Caco-2 (cell line): ENCODE measurements at regions of chr16 and their contacts with region 1.

Region 1: GRCh38 chr16:85821441-85822135 is 22.1 kb downstream of the COX4I1 start:
- DNase-seq: peak; percentile 89 to 92
- H3K4me3 ChIP-seq: no peak overlapping the region
- H3K4me3 Mint-ChIP-seq: no peak overlapping the region
- H3K27ac Mint-ChIP-seq: no peak overlapping the region
- H3K4me1 ChIP-seq: peaks cover 3% of the 10 kb centered on the region; the same call in 1 of the 2 replicates
- H3K4me1 Mint-ChIP-seq: peaks cover 7% of the 10 kb centered on the region
- H3K27me3 ChIP-seq: no peaks in the 10 kb centered on the region
- H3K27me3 Mint-ChIP-seq: no peaks in the 10 kb centered on the region
- CTCF ChIP-seq: peak; percentile 95 to 99

Region 2: DNA sequence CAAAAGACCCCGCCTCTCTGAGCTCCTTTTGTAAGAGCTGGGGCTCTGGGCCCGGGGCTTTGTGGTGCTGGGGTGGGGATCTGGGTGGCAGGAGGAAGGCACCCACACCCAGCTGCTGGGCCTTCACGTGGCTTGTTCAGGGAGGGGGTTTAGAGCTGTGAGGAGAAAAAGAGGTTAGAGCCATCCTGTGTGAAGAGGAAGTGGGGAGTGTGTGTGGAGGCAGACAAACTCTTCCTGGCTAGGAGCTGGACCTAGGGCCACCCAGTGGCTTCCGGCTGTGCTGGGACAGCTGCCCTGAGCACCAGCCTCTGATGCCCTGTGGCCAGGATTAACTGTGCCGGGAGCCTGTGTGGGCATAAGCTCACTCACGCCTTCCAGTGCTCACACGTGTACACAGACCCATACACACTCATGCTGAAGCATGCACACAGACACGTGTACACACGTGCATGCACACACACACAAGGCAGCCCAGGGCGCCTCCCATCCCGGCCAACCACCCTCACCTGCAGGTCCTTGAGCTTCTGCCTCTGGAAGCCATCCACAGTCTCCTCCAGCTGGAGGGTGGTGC is 716.7 kb before region 1 on chr16:
- CTCF ChIA-PET with region 1: no interaction called
- POLR2A ChIA-PET with region 1: no interaction called
- intact Hi-C with region 1: no loop called
- DNase-seq: no peak
- H3K4me3 ChIP-seq: no peak overlapping the region
- H3K4me3 Mint-ChIP-seq: no peak overlapping the region
- H3K27ac Mint-ChIP-seq: no peak overlapping the region
- H3K4me1 ChIP-seq: no peaks in the 10 kb centered on the region
- H3K4me1 Mint-ChIP-seq: no peaks in the 10 kb centered on the region
- H3K27me3 ChIP-seq: no peaks in the 10 kb centered on the region
- H3K27me3 Mint-ChIP-seq: no peaks in the 10 kb centered on the region
- CTCF ChIP-seq: no peak

Region 3: GRCh38 chr16:85738923-85739695 is 82.5 kb before region 1 on chr16:
- CTCF ChIA-PET with region 1: no interaction called
- POLR2A ChIA-PET with region 1: no interaction called
- intact Hi-C with region 1: no loop called
- DNase-seq: no peak
- H3K4me3 ChIP-seq: no peak overlapping the region
- H3K4me3 Mint-ChIP-seq: no peak overlapping the region
- H3K27ac Mint-ChIP-seq: no peak overlapping the region
- H3K4me1 ChIP-seq: 0 out of 2 replicates have a peak, but pooled peaks cover 4% of the 10 kb centered on the region
- H3K4me1 Mint-ChIP-seq: no peaks in the 10 kb centered on the region
- H3K27me3 ChIP-seq: no peaks in the 10 kb centered on the region
- H3K27me3 Mint-ChIP-seq: no peaks in the 10 kb centered on the region
- CTCF ChIP-seq: no peak

Region 4: DNA sequence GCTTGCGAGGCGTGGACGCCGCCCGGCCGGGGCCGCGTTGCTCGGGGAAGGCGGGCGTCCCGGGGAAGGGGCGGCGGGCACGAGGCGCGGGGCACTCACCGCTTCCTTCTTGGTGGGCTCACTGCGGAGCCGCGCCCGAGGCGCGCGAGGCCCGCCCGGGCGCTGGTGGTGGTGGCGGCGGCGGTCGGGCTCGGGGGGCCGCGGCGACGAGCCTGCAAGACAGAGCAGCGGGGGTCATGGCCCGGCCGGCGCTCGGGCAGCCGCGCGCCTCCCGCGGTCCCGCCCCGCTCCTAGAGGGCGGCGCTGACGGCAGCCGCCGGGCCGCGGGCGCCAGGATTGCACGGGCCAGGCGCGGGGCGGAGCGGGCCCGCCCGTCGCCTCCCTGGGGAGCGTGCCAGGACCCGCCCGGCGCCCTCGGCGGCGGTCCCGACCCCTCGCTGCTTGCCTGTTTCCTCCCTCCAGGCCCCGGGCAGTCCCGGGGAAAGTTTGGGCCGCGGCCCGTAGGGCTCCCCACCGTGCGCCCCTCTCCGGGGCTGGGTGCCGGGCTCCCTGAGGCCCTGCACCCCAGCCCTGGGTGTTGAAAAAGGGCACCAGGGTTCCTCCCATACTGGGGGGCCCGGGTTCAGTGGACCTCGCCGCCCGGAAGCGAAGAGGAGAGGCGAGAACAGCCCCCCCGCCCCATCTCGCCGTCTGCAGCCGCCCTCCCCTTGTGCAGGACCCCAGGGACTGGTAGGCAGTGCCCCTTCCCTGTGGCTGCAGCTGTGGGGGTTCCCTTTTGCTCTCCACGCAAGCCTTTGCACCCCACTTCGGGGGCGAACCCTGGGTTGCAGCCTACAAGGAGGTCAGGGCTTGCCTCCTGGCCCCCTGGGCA is 70.5 kb before region 1 on chr16 and contains the start of gene C16orf74:
- CTCF ChIA-PET with region 1: no interaction called
- POLR2A ChIA-PET with region 1: no interaction called
- intact Hi-C with region 1: no loop called
- DNase-seq: peak in 1 of 2 experiments; percentile 75
- H3K4me3 ChIP-seq: peak within 1 kb of the TSS; percentile 72
- H3K4me3 Mint-ChIP-seq: peak within 1 kb of the TSS; percentile 90
- H3K27ac Mint-ChIP-seq: peak within 1 kb of the TSS; percentile 69
- H3K4me1 ChIP-seq: peaks cover 28% of the 10 kb centered on the region
- H3K4me1 Mint-ChIP-seq: peaks cover 10% of the 10 kb centered on the region
- H3K27me3 ChIP-seq: no peaks in the 10 kb centered on the region; the same call in 1 of the 2 replicates
- H3K27me3 Mint-ChIP-seq: no peaks in the 10 kb centered on the region
- CTCF ChIP-seq: no peak
- total RNA-seq, gene C16orf74: 3.8 and 4.0 TPM in 2 replicates

Region 5: GRCh38 chr16:85860413-85861094 is 39.0 kb after region 1 on chr16:
- CTCF ChIA-PET with region 1: interaction called, 11 read pairs
- POLR2A ChIA-PET with region 1: no interaction called
- intact Hi-C with region 1: no loop called
- DNase-seq: peak in 1 of 2 experiments; percentile 26
- H3K4me3 ChIP-seq: no peak overlapping the region
- H3K4me3 Mint-ChIP-seq: no peak overlapping the region
- H3K27ac Mint-ChIP-seq: peak overlapping the region; percentile 58
- H3K4me1 ChIP-seq: peaks cover 9% of the 10 kb centered on the region
- H3K4me1 Mint-ChIP-seq: peaks cover 13% of the 10 kb centered on the region
- H3K27me3 ChIP-seq: no peaks in the 10 kb centered on the region
- H3K27me3 Mint-ChIP-seq: no peaks in the 10 kb centered on the region
- CTCF ChIP-seq: no peak

Region 6: DNA sequence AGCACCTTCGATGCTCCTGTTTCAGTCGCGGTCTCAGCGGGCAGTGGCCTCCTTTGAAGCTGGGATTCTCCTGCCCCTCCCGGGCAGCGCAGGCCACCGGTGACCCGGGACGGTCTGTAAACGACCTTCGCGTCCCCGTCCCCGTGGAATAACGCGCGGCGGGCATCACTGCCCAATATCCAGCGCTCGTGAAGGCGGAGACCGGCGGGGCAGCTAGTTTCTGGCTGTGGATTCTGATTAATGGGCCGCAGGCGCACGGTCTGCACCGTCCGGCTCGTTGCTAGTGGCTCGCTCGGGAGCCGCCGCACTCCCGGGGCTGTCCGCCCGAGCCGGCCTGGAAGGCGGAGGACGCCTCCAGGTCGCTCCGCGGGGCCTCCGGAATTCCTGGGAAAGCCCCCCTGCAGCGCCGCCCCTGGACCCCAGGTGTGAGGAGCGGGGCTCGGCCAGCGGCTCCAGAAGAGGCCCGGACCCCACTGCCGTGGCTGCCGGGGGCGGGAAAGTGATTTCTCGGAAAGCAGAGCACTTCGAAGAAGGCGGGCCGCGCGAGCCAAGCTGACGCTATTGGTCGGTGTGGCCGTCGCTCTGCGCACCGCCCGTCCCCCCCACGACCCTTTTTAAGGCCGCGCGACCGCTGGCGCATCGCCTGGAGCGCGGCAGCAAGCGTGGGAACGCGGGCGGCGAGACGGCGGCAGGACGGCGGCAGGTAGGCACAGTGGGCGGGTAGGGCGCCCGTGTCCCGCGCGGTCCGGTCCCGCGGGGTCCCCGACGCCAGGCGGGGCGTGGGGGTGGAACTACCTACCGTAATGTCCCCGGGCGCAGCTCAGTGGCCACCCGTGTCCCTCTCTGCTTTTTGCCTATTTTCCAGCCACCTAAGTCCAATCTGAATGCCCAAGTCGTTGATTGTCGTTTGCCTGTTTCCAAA is 77.2 kb after region 1 on chr16 and contains the start of gene IRF8:
- CTCF ChIA-PET with region 1: interaction called, 58 read pairs
- POLR2A ChIA-PET with region 1: no interaction called
- intact Hi-C with region 1: loop called (anchors 1 kb)
- DNase-seq: peak; percentile 85 to 91
- H3K4me3 ChIP-seq: peak within 1 kb of the TSS; percentile 78
- H3K4me3 Mint-ChIP-seq: peak within 1 kb of the TSS; percentile 84
- H3K27ac Mint-ChIP-seq: peak within 1 kb of the TSS; percentile 66
- H3K4me1 ChIP-seq: peaks cover 24% of the 10 kb centered on the region
- H3K4me1 Mint-ChIP-seq: peaks cover 36% of the 10 kb centered on the region
- H3K27me3 ChIP-seq: no peaks in the 10 kb centered on the region
- H3K27me3 Mint-ChIP-seq: no peaks in the 10 kb centered on the region
- CTCF ChIP-seq: no peak
- total RNA-seq, gene IRF8: 29.5 and 31.7 TPM in 2 replicates

Region 7: GRCh38 chr16:85979605-85980004 is 158.0 kb after region 1 on chr16:
- CTCF ChIA-PET with region 1: interaction called, 147 read pairs
- POLR2A ChIA-PET with region 1: no interaction called
- intact Hi-C with region 1: no loop called
- DNase-seq: no peak
- H3K4me3 ChIP-seq: no peak overlapping the region
- H3K4me3 Mint-ChIP-seq: no peak overlapping the region
- H3K27ac Mint-ChIP-seq: peak overlapping the region; percentile 3
- H3K4me1 ChIP-seq: peaks cover 34% of the 10 kb centered on the region
- H3K4me1 Mint-ChIP-seq: peaks cover 30% of the 10 kb centered on the region
- H3K27me3 ChIP-seq: no peaks in the 10 kb centered on the region
- H3K27me3 Mint-ChIP-seq: no peaks in the 10 kb centered on the region
- CTCF ChIP-seq: no peak

Region 8: DNA sequence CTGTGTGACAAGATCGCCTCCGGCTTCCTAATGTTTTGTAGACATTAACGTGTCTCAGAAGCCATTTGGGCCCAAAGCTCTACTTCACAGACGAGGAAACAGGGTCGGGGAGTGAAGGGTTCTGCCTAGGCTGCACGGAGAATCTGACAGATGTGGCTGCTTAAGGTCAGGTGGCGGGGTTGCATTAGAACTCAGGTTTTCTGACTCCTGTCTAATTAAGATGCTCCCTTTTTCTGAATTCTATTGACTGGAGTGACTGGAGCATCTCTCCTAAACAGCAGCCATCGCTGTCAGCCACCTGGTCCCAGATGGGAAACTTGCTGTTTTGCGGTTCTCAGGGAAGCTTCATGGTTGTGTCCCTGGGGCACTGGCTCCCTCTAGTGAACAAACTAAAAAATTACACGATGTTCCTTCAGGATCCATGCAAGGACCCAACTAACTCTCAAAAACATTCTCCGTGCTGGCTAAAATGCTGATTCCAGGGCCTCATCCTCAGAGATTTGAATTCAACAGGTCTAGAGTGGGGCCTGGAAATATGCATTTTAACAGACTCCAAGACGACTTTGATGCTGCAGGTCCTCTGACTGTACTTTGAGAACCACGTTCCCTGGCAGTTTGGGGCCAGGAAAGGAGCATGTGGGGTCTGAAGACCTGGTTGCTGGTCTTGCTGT is 194.7 kb after region 1 on chr16:
- CTCF ChIA-PET with region 1: interaction called, 59 read pairs
- POLR2A ChIA-PET with region 1: no interaction called
- intact Hi-C with region 1: loop called (anchors 1 kb)
- DNase-seq: peak; percentile 57 to 73
- H3K4me3 ChIP-seq: no peak overlapping the region
- H3K4me3 Mint-ChIP-seq: no peak overlapping the region
- H3K27ac Mint-ChIP-seq: no peak overlapping the region
- H3K4me1 ChIP-seq: no peaks in the 10 kb centered on the region
- H3K4me1 Mint-ChIP-seq: no peaks in the 10 kb centered on the region
- H3K27me3 ChIP-seq: no peaks in the 10 kb centered on the region
- H3K27me3 Mint-ChIP-seq: peaks cover 7% of the 10 kb centered on the region
- CTCF ChIP-seq: peak; percentile 81 to 86

Region 9: GRCh38 chr16:86519649-86520316 is 698.2 kb after region 1 on chr16:
- CTCF ChIA-PET with region 1: interaction called, 10 read pairs
- POLR2A ChIA-PET with region 1: no interaction called
- intact Hi-C with region 1: loop called (anchors 5 kb)
- DNase-seq: peak; percentile 67 to 77
- H3K4me3 ChIP-seq: no peak overlapping the region
- H3K4me3 Mint-ChIP-seq: no peak overlapping the region
- H3K27ac Mint-ChIP-seq: no peak overlapping the region
- H3K4me1 ChIP-seq: no peaks in the 10 kb centered on the region
- H3K4me1 Mint-ChIP-seq: no peaks in the 10 kb centered on the region
- H3K27me3 ChIP-seq: peaks cover 1% of the 10 kb centered on the region; the same call in 1 of the 2 replicates
- H3K27me3 Mint-ChIP-seq: peaks cover 20% of the 10 kb centered on the region
- CTCF ChIP-seq: peak; percentile 94 to 96